IMR-90 (cell line): ENCODE measurements at regions of chr12 and their contacts with region 1.

Region 1: GRCh38 chr12:62435303-62436163 is 31.1 kb upstream of the MON2 start:
- DNase-seq: peak; percentile 63
- ATAC-seq: peak; percentile 91
- H3K4me3 ChIP-seq: peak overlapping the region; percentile 27
- H3K27ac ChIP-seq: no peak overlapping the region
- H3K4me1 ChIP-seq: no peaks in the 10 kb centered on the region
- H3K27me3 ChIP-seq: peaks cover 13% of the 10 kb centered on the region
- CTCF ChIP-seq: peak; percentile 53
- POLR2A ChIP-seq: no peak
- RAD21 ChIP-seq: peak; percentile 19; the same call in 1 of the 2 replicates

Region 2: DNA sequence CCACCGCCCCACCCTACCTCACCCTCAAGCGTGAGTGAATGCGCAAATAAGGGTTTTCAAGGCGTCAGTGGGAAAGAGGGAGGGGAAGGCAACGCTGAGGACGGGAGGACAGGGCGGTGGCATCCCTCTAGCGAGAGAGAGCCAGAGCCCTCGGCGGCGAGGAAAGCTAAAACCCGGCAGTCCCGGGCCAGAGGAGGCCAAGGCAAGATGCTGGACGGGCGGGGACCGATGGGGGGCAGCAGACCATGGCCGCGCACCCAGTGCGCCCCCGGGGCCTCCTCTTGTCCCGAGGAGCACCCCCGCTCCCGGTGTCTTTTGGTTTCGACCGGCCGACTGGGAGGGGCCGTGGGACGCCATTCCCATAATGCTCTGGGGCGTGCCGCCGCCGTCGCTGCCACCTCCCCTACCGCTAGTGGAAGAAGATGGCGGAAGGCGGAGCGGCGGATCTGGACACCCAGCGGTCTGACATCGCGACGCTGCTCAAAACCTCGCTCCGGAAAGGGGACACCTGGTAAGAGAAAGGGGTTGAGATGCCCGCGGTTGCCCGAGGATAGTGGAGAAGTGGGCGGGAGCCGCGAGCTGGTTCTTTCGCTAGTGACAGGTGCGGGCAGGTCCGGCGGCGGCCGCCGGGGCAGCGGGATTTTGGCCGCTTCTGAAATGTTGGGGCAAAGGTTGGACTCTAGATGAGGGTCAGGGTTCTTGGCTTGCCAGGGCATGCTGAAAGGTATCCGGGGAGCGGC is 175.4 kb before region 1 on chr12 and contains the start of gene USP15:
- CTCF ChIA-PET with region 1: no interaction called
- POLR2A ChIA-PET with region 1: no interaction called
- dilution Hi-C with region 1: no loop called
- in situ Hi-C with region 1: no loop called
- intact Hi-C with region 1: loop called (anchors 2 kb)
- DNase-seq: peak; percentile 97
- ATAC-seq: peak; percentile 96
- H3K4me3 ChIP-seq: peak within 1 kb of the TSS; percentile 75
- H3K27ac ChIP-seq: peak within 1 kb of the TSS; percentile 92
- H3K4me1 ChIP-seq: no peaks in the 10 kb centered on the region; the same call in 1 of the 2 replicates
- H3K27me3 ChIP-seq: no peaks in the 10 kb centered on the region
- CTCF ChIP-seq: peak; percentile 90
- POLR2A ChIP-seq: peak; percentile 88
- RAD21 ChIP-seq: no peak
- total RNA-seq, gene USP15: 49.6 and 82.5 TPM in 2 replicates

Region 3: GRCh38 chr12:62581288-62582064 is 145.9 kb after region 1 on chr12:
- CTCF ChIA-PET with region 1: interaction called, 3 read pairs
- POLR2A ChIA-PET with region 1: no interaction called
- dilution Hi-C with region 1: no loop called
- in situ Hi-C with region 1: no loop called
- intact Hi-C with region 1: loop called (anchors 1 kb)
- DNase-seq: peak; percentile 73
- ATAC-seq: peak; percentile 90
- H3K4me3 ChIP-seq: no peak overlapping the region
- H3K27ac ChIP-seq: no peak overlapping the region
- H3K4me1 ChIP-seq: no peaks in the 10 kb centered on the region
- H3K27me3 ChIP-seq: no peaks in the 10 kb centered on the region
- CTCF ChIP-seq: peak; percentile 73
- POLR2A ChIP-seq: no peak
- RAD21 ChIP-seq: peak; percentile 77

Region 4: DNA sequence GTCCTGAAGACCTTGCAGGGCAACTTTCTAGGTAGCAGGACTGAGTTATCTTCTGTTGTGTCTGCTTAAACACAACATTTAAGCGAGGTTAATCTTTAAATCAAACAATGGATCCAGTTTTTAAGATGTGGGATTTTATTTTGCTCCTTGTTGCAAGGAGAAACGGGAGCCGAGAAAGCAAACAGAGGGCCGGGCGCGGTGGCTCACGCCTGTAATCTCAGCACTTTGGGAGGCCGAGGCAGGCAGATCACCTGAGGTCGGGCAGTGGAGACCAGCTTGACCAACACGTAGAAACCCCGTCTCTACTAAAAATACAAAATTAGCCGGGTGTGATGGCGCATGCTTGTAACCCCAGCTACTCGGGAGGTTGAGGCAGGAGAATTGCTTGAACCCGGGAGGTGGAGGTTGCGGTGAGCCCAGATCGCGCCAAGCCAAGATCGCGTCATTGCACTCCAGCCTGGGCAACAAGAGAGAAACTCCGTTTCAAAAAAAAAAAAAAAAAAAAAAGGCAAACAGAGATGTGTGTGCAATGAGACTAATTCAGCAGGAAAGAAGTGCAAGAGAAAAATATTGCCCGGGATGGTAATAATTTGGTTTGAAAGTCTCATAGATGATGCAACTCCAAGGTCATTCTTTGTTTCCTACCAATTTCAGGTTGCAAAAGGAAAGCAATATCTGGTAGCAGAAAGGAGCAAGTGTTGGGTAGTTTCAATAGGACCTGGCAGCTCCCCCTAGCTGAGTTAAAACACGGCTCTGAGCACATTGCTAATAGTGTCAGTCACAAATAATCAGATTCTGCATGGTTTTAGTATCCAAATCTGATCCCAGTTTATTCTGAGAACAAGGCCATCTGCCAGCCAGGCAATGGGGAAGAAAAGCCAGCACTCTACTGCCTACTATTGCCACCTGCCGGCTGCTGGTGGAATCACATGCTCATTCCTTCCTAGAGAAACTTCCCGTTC is 358.0 kb after region 1 on chr12:
- CTCF ChIA-PET with region 1: interaction called, 13 read pairs
- POLR2A ChIA-PET with region 1: no interaction called
- dilution Hi-C with region 1: no loop called
- in situ Hi-C with region 1: loop called (anchors 5 kb)
- intact Hi-C with region 1: loop called (anchors 1 kb)
- DNase-seq: peak; percentile 87
- ATAC-seq: peak; percentile 99
- H3K4me3 ChIP-seq: no peak overlapping the region
- H3K27ac ChIP-seq: no peak overlapping the region
- H3K4me1 ChIP-seq: no peaks in the 10 kb centered on the region
- H3K27me3 ChIP-seq: no peaks in the 10 kb centered on the region
- CTCF ChIP-seq: peak; percentile 97
- POLR2A ChIP-seq: no peak; the same call in 1 of the 2 replicates
- RAD21 ChIP-seq: peak; percentile 99

Region 5: GRCh38 chr12:62813031-62813829 is 377.7 kb after region 1 on chr12:
- CTCF ChIA-PET with region 1: interaction called, 4 read pairs
- POLR2A ChIA-PET with region 1: no interaction called
- dilution Hi-C with region 1: no loop called
- in situ Hi-C with region 1: no loop called
- intact Hi-C with region 1: loop called (anchors 5 kb)
- DNase-seq: peak; percentile 68
- ATAC-seq: peak; percentile 89
- H3K4me3 ChIP-seq: no peak overlapping the region
- H3K27ac ChIP-seq: no peak overlapping the region
- H3K4me1 ChIP-seq: no peaks in the 10 kb centered on the region
- H3K27me3 ChIP-seq: peaks cover 20% of the 10 kb centered on the region
- CTCF ChIP-seq: peak; percentile 65
- POLR2A ChIP-seq: no peak
- RAD21 ChIP-seq: peak; percentile 70